HepG2 (cell line): ENCODE measurements at regions of chr13 and their contacts with region 1.

Region 1: DNA sequence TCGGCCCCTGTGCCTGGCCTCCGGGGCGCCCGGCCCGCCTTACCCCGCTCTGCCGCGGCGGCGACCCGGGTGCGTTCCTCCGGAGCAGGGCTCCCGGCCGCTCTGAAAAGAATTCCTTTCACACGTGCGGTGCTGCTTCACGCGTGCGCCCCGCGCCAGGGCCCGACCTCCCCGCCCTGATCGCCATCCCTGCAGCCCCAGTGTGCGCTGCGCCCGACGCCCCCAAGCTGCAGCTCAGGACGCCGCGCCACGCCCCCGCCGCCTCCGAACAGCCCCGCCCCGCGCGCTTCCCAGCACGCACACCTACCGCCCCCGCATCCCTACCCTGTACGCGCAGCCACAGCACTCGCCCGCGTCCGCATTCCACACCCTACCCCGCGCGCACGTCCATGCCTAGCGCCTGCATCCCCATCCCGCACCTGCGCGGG is at the start of gene GJA3:
- DNase-seq: no peak
- ATAC-seq: peak; percentile 78
- H3K4me3 ChIP-seq: peak within 1 kb of the TSS; percentile 52 to 68 (median 56)
- H3K27ac ChIP-seq: no peak within 1 kb of the TSS
- H3K4me1 ChIP-seq: peaks cover 17% of the 10 kb centered on the region
- H3K27me3 ChIP-seq: peaks cover 0 to 18% of the 10 kb centered on the region in 2 experiments; a peak in 2 of 5 replicates
- CTCF ChIP-seq: no peak
- EP300 ChIP-seq: no peak
- POLR2A ChIP-seq: no peak
- RAD21 ChIP-seq: no peak
- total RNA-seq, gene GJA3: 0.03 and 0.04 TPM in 2 replicates

Region 2: DNA sequence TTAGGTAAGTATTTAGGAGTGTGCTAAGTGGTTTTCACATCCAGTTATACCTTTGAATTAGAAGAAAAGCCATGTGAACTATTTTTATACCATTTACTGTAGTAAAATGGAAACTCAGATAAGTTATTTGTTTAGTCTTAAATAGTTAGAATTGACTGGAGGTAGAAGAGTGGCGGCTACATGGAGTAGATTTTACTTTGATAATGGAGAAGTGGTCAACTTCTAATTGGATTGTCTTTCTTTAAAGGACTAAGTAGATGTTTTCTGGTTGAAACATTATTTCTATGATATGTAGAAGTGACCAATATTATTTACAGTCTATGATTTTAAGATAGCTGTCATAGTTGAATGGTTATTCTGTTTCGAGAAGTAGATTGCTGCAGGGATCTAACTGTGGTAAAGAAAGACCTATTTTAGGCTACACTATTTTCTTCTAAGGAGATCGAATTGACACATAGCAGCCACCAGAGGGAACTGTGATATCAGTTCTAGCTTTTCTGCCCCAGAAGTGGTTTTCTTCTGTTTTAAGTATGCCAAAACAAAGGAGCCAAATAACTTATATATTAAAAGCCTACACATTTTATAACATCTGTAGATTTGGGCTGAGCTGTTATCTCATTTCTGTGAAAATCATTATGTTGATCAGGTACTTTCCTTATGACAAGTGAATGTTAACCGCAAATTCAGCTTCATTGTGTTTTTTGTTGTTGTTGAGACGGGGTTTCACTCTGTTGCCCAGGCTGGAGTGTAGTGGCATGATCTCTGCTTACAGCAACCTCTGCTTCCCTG is 176.2 kb before region 1 on chr13:
- CTCF ChIA-PET with region 1: interaction called, 15 read pairs
- POLR2A ChIA-PET with region 1: no interaction called
- in situ Hi-C with region 1: no loop called
- intact Hi-C with region 1: loop called (anchors 5 kb)
- DNase-seq: peak; percentile 16
- ATAC-seq: peak; percentile 72
- H3K4me3 ChIP-seq: no peak overlapping the region
- H3K27ac ChIP-seq: no peak overlapping the region
- H3K4me1 ChIP-seq: peaks cover 12% of the 10 kb centered on the region; the same call in 1 of the 2 replicates
- H3K27me3 ChIP-seq: no peaks in the 10 kb centered on the region
- CTCF ChIP-seq: peak; percentile 53
- EP300 ChIP-seq: no peak
- POLR2A ChIP-seq: no peak
- RAD21 ChIP-seq: no peak

Region 3: GRCh38 chr13:20057963-20058362 is 102.9 kb before region 1 on chr13:
- CTCF ChIA-PET with region 1: interaction called, 3 read pairs
- POLR2A ChIA-PET with region 1: no interaction called
- in situ Hi-C with region 1: no loop called
- intact Hi-C with region 1: loop called (anchors 1 kb)
- DNase-seq: no peak
- ATAC-seq: no peak
- H3K4me3 ChIP-seq: no peak overlapping the region
- H3K27ac ChIP-seq: no peak overlapping the region
- H3K4me1 ChIP-seq: no peaks in the 10 kb centered on the region
- H3K27me3 ChIP-seq: no peaks in the 10 kb centered on the region
- CTCF ChIP-seq: no peak
- EP300 ChIP-seq: no peak
- POLR2A ChIP-seq: no peak
- RAD21 ChIP-seq: no peak

Region 4: GRCh38 chr13:20127577-20128466 is 33.0 kb before region 1 on chr13:
- CTCF ChIA-PET with region 1: interaction called, 8 read pairs
- POLR2A ChIA-PET with region 1: interaction called, 3 read pairs
- in situ Hi-C with region 1: no loop called
- intact Hi-C with region 1: loop called (anchors 1 kb)
- DNase-seq: peak; percentile 53
- ATAC-seq: peak; percentile 92
- H3K4me3 ChIP-seq: peak overlapping the region; percentile 74 to 83 (median 79)
- H3K27ac ChIP-seq: peak overlapping the region; percentile 96
- H3K4me1 ChIP-seq: peaks cover 33% of the 10 kb centered on the region
- H3K27me3 ChIP-seq: no peaks in the 10 kb centered on the region
- CTCF ChIP-seq: peak; percentile 90
- EP300 ChIP-seq: 0 out of 4 replicates have a peak, but pooled peaks of 1 of the 2 experiments have one; percentile 15
- POLR2A ChIP-seq: peak; percentile 70 to 76
- RAD21 ChIP-seq: peak; percentile 79